Breast epithelium (tissue), 4 donors: ENCODE measurements at regions of chr3 and their contacts with region 1.

Region 1: DNA sequence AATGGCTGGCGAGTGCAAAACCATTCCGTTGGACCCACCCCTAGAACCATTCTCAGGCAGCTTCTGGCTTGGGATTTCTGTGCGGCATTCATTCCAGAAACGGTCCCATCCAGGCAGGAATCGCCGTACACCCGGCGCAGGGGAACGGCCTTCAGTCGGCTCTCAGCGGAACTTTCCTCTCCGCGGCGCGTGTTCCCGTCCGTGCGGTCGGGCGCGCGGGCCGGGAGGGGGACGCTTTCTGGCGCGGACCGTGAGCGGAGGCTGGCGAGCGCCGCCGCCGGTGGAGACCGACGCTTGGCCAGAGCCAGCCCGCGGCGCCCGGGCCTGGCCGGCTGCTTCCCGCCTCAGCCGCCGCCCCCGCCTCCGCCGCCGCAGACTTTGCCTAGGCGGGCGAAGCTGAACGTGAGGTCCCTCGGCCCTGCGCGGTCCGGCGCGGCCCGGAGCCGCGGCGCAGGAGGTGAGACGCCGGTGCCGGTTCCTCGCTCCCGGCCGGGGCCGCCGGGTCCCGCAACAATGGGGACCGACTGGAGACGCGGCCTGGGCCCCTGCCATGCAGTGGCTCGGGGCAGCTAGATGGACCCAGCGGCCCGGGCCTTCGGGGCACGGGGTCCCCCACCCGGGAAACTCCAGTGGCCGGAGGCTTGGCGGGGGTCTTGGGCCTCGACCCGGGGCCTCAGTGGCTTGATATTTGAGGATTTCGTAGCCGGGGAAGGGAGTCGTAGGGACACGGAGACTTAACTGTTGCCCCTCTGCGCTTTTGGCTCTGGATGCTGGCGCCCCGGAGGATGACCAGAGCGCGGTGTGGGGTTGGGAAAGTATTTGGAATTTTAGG is at the start of gene RAD54L2:
- DNase-seq: peak; percentile 59 to 81
- H3K4me3 ChIP-seq: peak within 1 kb of the TSS; percentile 86 to 97 (median 93)
- H3K27ac ChIP-seq: peak within 1 kb of the TSS; percentile 91 to 92
- H3K4me1 ChIP-seq: peaks cover 3 to 6% of the 10 kb centered on the region in 2 donors
- H3K27me3 ChIP-seq: no peaks in the 10 kb centered on the region
- CTCF ChIP-seq: no peak
- POLR2A ChIP-seq: no peak
- total RNA-seq, gene RAD54L2: 20.2 to 28.5 (median 22.6) TPM

Region 2: GRCh38 chr3:51501833-51502561 is 36.7 kb before region 1 on chr3:
- intact Hi-C with region 1: loop called (anchors 1 kb)
- DNase-seq: peak; percentile 56 to 78
- H3K4me3 ChIP-seq: no peak overlapping the region
- H3K27ac ChIP-seq: peak overlapping the region; percentile 14 to 38
- H3K4me1 ChIP-seq: peaks cover 0 to 4% of the 10 kb centered on the region in 2 donors
- H3K27me3 ChIP-seq: no peaks in the 10 kb centered on the region
- CTCF ChIP-seq: peak; percentile 79 to 95 (median 90)
- POLR2A ChIP-seq: no peak

Region 3: DNA sequence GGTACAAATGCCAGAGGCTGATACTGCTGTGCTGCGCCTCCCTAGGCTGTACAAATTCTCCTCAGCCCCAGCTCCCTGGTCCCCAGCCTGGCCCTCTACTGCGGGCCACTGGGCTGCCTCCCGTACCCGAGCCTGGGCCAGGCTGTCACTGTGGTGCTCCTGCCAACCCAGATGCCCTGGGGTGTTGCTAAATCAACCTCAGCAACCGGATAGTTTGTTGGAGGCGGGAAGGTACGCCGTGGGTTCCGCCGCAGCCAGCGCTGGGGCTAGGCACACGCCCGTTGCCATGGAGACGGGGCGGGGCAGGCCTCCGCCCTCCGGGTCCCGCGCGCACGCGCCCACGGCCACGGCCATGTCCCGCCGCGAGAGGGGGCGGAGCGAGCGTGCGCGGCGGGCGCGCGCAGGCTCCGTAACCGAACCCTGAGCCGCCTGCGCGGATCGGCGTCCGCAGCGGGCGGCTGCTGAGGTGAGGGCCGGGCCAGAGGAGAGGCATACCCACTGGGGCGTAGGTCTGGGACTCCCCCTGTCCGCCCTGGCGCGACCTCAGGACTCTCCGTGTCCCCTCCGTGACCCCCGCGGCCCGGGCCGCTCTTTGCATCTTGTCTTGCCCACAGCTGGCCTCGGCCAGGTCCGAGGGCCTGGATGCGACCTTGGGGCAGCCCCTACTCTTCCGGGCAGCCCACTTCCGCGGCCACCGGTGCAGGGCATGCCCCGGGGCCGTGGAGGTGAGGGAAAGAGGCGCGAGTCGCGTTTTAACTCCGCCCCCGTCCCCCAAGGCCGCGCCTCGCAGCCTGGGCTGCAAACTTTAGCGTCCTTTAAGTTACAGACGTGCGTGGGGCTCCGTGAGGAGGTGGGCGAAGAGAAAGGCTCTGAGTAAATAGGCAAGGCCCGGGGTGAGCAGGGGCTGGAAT is 132.4 kb after region 1 on chr3 and contains the start of gene TEX264:
- intact Hi-C with region 1: loop called (anchors 1 kb)
- DNase-seq: peak; percentile 86 to 91
- H3K4me3 ChIP-seq: peak within 1 kb of the TSS; percentile 71 to 93 (median 92)
- H3K27ac ChIP-seq: peak within 1 kb of the TSS; percentile 91 to 93
- H3K4me1 ChIP-seq: peaks cover 3 to 7% of the 10 kb centered on the region in 2 donors
- H3K27me3 ChIP-seq: no peaks in the 10 kb centered on the region
- CTCF ChIP-seq: no peak
- POLR2A ChIP-seq: peak; percentile 48
- total RNA-seq, gene TEX264: 55.7 to 94.3 (median 80.5) TPM